ENCODE measurements at regions of chr10 and their contacts with region 1.

Region 1: GRCh38 chr10:112471878-112472487 is 25.0 kb downstream of the VTI1A start:
- DNase-seq: peak; percentile 65
- CTCF ChIP-seq: peak; percentile 59

Region 2: GRCh38 chr10:112404616-112405015 is 67.4 kb before region 1 on chr10:
- CTCF ChIA-PET with region 1: interaction called, 10 read pairs
- POLR2A ChIA-PET with region 1: no interaction called
- DNase-seq: no peak
- CTCF ChIP-seq: no peak

Region 3: DNA sequence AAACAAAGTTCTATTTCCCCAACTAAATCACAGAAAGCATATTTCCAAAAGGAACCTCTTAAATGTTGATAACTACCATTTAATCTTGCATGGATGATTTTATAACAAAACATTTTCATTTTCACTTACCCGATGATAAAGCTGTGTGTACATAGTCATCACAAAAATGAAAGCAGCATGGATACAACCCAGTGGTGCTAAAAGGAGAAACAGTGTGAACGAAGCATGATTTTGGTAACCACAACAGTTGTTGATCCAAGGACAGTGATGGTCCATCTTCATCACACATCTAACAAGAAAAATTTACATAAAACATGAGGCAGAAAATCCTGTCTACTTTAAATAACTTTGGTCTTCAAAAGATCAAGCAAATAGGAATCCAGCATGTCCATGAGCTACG is 29.9 kb before region 1 on chr10:
- CTCF ChIA-PET with region 1: interaction called, 12 read pairs
- POLR2A ChIA-PET with region 1: no interaction called
- DNase-seq: no peak
- CTCF ChIP-seq: no peak

Region 4: GRCh38 chr10:112490545-112490944 is 18.6 kb after region 1 on chr10:
- CTCF ChIA-PET with region 1: interaction called, 14 read pairs
- POLR2A ChIA-PET with region 1: no interaction called
- DNase-seq: no peak
- CTCF ChIP-seq: no peak

Region 5: DNA sequence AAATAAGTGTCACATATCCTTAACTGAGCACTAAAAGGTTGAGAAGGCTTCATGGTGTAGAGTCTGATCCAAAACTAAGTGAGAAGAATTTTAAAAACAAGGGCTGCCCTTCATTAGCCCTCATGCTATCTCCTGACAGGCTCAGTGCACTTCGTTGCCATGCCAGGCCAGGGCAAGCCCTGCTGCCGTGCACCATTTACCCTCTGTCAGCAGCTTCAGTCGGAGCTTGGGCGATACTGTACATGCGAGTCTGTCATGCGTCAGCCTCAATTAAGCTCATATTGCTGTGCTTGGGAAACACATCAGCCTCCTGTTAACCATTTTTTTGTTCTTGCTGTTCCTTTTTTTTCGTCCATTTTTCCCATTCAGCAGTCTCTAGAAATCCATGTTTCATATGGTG is 141.6 kb after region 1 on chr10:
- CTCF ChIA-PET with region 1: no interaction called
- POLR2A ChIA-PET with region 1: no interaction called
- DNase-seq: no peak
- CTCF ChIP-seq: no peak

Region 6: GRCh38 chr10:112803961-112804401 is 332.0 kb after region 1 on chr10:
- CTCF ChIA-PET with region 1: no interaction called
- POLR2A ChIA-PET with region 1: no interaction called
- DNase-seq: no peak
- CTCF ChIP-seq: no peak

Measured in GM10248 (cell line).